ENCODE measurements at regions of chr13 and their contacts with region 1.

Region 1: DNA sequence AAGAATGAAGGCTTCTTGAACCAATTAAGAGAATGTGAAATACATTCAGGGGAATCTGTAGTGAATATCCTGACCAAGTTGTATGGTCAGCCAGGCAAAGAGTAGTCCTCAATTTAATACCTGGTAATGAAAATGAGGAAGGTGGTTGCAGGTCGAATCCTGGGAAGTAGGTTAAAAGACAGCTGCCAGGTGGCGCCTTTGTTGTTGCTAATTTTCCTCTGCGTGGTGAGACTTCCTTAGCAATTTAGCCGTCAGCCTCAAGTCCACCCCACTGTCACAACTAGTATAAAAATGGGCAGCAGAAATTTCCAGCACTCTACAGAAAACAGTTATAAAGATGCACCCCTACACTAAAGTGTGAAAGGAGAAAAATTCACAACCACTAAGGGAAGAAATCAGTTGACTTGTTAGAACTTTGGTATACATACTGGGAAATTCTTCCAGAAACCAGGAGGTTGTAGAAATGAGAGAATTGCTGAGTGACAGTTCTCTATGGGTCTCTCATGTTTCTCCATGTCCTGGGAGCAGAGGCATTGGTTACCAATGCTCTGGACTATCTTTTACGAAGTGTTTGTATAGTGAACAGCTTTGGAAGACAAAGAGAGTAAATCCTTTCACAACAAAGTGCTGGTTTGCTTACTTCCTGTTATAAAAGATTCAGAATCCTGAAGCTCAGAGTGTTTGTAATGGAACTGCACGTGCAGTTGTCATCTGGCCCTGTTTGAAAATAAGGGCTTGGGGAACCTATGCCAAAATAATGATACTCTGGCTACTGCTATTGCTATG is 235.9 kb downstream of the NHLRC3 start:
- DNase-seq: no peak
- ATAC-seq: peak in 3 of 8 donors; percentile 15 to 61 (median 22)
- H3K4me3 ChIP-seq: no peak overlapping the region
- H3K27ac ChIP-seq: peak overlapping the region in 2 of 10 donors; percentile 8 to 22
- H3K4me1 ChIP-seq: peaks cover 0 to 23% (median 7%) of the 10 kb centered on the region in 9 donors
- H3K27me3 ChIP-seq: no peaks in the 10 kb centered on the region
- CTCF ChIP-seq: peak in 7 of 9 donors; percentile 10 to 45 (median 39)

Region 2: DNA sequence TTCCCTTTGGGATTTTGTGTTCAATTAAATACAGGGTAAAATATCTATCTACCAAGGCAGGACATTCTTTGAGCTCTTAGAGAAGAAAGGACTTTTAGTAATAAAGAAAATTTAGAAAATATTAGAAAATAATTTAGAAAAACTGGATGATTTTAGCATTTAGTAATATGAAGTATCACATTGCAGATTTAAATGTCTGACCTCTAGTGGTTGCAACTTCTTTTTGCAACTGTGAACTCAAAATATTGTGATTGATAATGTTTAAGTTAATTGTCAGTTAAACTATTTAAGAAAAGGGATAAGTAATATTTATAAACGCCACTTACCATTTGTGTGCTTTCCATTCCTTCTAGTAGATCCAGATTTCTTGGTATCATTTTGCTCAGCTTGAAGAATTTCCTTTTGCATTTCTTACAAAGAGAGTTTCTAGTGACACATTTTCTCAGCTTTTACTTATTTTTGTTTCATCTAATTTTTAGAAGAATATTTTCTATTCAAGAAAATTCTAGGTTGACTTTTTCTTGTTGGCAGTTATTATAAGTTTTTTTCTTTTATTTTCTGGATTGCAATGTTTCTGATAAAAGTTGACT is 1665.3 kb before region 1 on chr13:
- intact Hi-C with region 1: no loop called
- DNase-seq: no peak
- ATAC-seq: no peak
- H3K4me3 ChIP-seq: no peak overlapping the region
- H3K27ac ChIP-seq: no peak overlapping the region
- H3K4me1 ChIP-seq: no peaks in the 10 kb centered on the region
- H3K27me3 ChIP-seq: no peaks in the 10 kb centered on the region
- CTCF ChIP-seq: peak in 8 of 9 donors; percentile 14 to 50 (median 42)

Region 3: DNA sequence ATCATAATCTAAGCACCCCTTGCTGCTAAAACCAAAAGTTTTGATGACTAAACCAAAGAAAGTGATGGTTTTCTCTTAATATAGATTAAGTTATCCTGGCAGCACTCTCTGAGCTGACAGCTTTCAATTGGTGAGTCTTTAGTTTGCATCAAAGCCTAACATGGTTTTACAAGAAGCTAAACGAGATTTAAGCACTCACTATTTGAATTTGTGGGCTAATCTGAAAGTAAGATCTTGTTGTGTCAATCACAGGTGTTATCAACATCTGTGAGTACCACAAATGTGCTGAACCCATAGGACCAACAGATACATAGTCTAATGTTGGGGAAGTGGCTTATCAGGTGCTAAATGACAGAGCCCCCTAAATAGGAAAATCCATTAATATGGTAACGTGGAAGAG is 105.0 kb after region 1 on chr13:
- intact Hi-C with region 1: no loop called
- DNase-seq: no peak
- ATAC-seq: no peak
- H3K4me3 ChIP-seq: no peak overlapping the region
- H3K27ac ChIP-seq: peak overlapping the region in 1 of 10 donors; percentile 2
- H3K4me1 ChIP-seq: peaks cover 0 to 56% (median 33%) of the 10 kb centered on the region in 9 donors
- H3K27me3 ChIP-seq: no peaks in the 10 kb centered on the region
- CTCF ChIP-seq: no peak

Region 4: GRCh38 chr13:39406688-39407087 is 132.5 kb after region 1 on chr13:
- intact Hi-C with region 1: loop called in 3 of 10 experiments (anchors 5 to 10 kb)
- DNase-seq: no peak
- ATAC-seq: no peak
- H3K4me3 ChIP-seq: no peak overlapping the region
- H3K27ac ChIP-seq: peak overlapping the region in 1 of 10 donors; percentile 87
- H3K4me1 ChIP-seq: peaks cover 0 to 89% (median 69%) of the 10 kb centered on the region in 9 donors
- H3K27me3 ChIP-seq: no peaks in the 10 kb centered on the region
- CTCF ChIP-seq: no peak

Region 5: GRCh38 chr13:39602614-39603366 is 328.6 kb after region 1 on chr13 and contains the start of gene LHFPL6:
- intact Hi-C with region 1: loop called in 1 of 10 experiments (anchors 5 kb)
- DNase-seq: peak; percentile 88 to 90
- ATAC-seq: peak; percentile 93 to 98 (median 94)
- H3K4me3 ChIP-seq: peak within 1 kb of the TSS; percentile 69 to 96 (median 90)
- H3K27ac ChIP-seq: peak within 1 kb of the TSS; percentile 87 to 98 (median 96)
- H3K4me1 ChIP-seq: peaks cover 0 to 50% (median 21%) of the 10 kb centered on the region in 9 donors
- H3K27me3 ChIP-seq: peaks cover 0 to 33% (median 0%) of the 10 kb centered on the region in 7 donors
- CTCF ChIP-seq: peak in 7 of 9 donors; percentile 39 to 69 (median 45)
- total RNA-seq, gene LHFPL6: 41.5 to 65.8 (median 58.2) TPM

Region 6: GRCh38 chr13:39616087-39616694 is 342.0 kb after region 1 on chr13:
- intact Hi-C with region 1: loop called in 6 of 10 experiments (anchors 5 to 10 kb)
- DNase-seq: peak in 1 of 2 donors; percentile 70
- ATAC-seq: peak; percentile 68 to 87 (median 82)
- H3K4me3 ChIP-seq: no peak overlapping the region
- H3K27ac ChIP-seq: no peak overlapping the region
- H3K4me1 ChIP-seq: peaks cover 0 to 12% (median 0%) of the 10 kb centered on the region in 9 donors
- H3K27me3 ChIP-seq: no peaks in the 10 kb centered on the region
- CTCF ChIP-seq: peak; percentile 81 to 96 (median 92)

Measured in heart right ventricle (tissue), 16 donors.